ENCODE measurements at regions of chr1 and their contacts with region 1.

Region 1: GRCh38 chr1:28088168-28088961 is at the start of gene EYA3:
- DNase-seq: peak; percentile 100
- H3K4me3 Mint-ChIP-seq: peak within 1 kb of the TSS; percentile 99
- H3K27ac Mint-ChIP-seq: peak within 1 kb of the TSS; percentile 95
- H3K4me1 Mint-ChIP-seq: peaks cover 35% of the 10 kb centered on the region
- H3K27me3 Mint-ChIP-seq: peaks cover 5% of the 10 kb centered on the region
- total RNA-seq, gene EYA3: 32.2 and 35.5 TPM in 2 replicates

Region 2: GRCh38 chr1:27858072-27858958 is 230.1 kb before region 1 on chr1:
- intact Hi-C with region 1: loop called (anchors 2 kb)
- DNase-seq: peak; percentile 72
- H3K4me3 Mint-ChIP-seq: no peak overlapping the region
- H3K27ac Mint-ChIP-seq: no peak overlapping the region
- H3K4me1 Mint-ChIP-seq: peaks cover 27% of the 10 kb centered on the region
- H3K27me3 Mint-ChIP-seq: no peaks in the 10 kb centered on the region

Region 3: GRCh38 chr1:28056129-28056925 is 32.0 kb before region 1 on chr1:
- intact Hi-C with region 1: loop called (anchors 1 kb)
- DNase-seq: peak; percentile 51
- H3K4me3 Mint-ChIP-seq: peak overlapping the region; percentile 21
- H3K27ac Mint-ChIP-seq: peak overlapping the region; percentile 86
- H3K4me1 Mint-ChIP-seq: peaks cover 34% of the 10 kb centered on the region
- H3K27me3 Mint-ChIP-seq: no peaks in the 10 kb centered on the region

Region 4: GRCh38 chr1:28104866-28105467 is 16.6 kb after region 1 on chr1:
- intact Hi-C with region 1: no loop called
- DNase-seq: no peak
- H3K4me3 Mint-ChIP-seq: no peak overlapping the region
- H3K27ac Mint-ChIP-seq: no peak overlapping the region
- H3K4me1 Mint-ChIP-seq: no peaks in the 10 kb centered on the region
- H3K27me3 Mint-ChIP-seq: peaks cover 13% of the 10 kb centered on the region

Region 5: DNA sequence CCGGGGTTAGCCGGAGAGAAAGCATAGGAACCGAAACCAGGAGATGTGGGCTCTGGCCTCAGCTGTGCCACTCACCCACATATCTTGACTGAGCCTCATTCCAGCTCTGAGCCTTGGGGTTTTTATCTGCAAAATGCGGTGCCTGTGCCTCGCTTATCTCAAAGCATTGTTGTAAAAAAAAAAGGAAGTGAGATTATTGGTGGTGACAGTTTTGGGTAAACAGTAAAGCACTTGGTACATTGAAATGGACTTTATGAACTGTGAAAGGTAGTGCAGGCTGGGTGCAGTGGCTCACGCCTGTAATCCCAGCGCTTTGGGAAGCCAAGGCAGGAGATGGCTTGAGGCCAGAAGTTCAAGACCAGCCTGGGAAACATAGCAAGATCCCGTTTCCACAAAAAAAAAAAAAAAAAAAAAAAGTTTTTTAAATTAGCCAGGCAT is 84.4 kb after region 1 on chr1:
- intact Hi-C with region 1: loop called (anchors 1 kb)
- DNase-seq: peak; percentile 51
- H3K4me3 Mint-ChIP-seq: peak overlapping the region; percentile 40
- H3K27ac Mint-ChIP-seq: peak overlapping the region; percentile 37
- H3K4me1 Mint-ChIP-seq: peaks cover 59% of the 10 kb centered on the region
- H3K27me3 Mint-ChIP-seq: peaks cover 45% of the 10 kb centered on the region

Region 6: GRCh38 chr1:28235755-28236655 is 147.6 kb after region 1 on chr1 and contains the start of gene ATP5IF1:
- intact Hi-C with region 1: loop called (anchors 1 kb)
- DNase-seq: peak; percentile 94
- H3K4me3 Mint-ChIP-seq: no peak within 1 kb of the TSS
- H3K27ac Mint-ChIP-seq: no peak within 1 kb of the TSS
- H3K4me1 Mint-ChIP-seq: peaks cover 11% of the 10 kb centered on the region
- H3K27me3 Mint-ChIP-seq: no peaks in the 10 kb centered on the region
- total RNA-seq, gene ATP5IF1: 128 and 132 TPM in 2 replicates

Measured in activated T-helper 1 cell treated with anti-CD3 and anti-CD28 coated beads, Interleukin-12 subunit alpha, Interleukin-12 subunit beta, Interleukin-2, Interleukin-4 antibody, amounts not matched to agents 30 ng/mL and 10 ng/mL and 1 ng/mL, durations not matched to agents 14 hours and 24 hours and 36 hours (primary cell).